SK-N-SH (cell line): ENCODE measurements at regions of chr15 and their contacts with region 1.

Region 1: GRCh38 chr15:74906446-74907162 is at the start of gene FAM219B:
- DNase-seq: peak; percentile 98
- H3K4me3 ChIP-seq: peak within 1 kb of the TSS; percentile 86 to 89
- H3K27ac ChIP-seq: peak within 1 kb of the TSS; percentile 58 to 84
- H3K4me1 ChIP-seq: peaks cover 4 to 18% of the 10 kb centered on the region in 2 experiments; a peak in 3 of 4 replicates
- H3K27me3 ChIP-seq: no peaks in the 10 kb centered on the region
- CTCF ChIP-seq: no peak
- EP300 ChIP-seq: no peak
- RAD21 ChIP-seq: no peak
- polyA plus RNA-seq, gene FAM219B: 53.0 and 90.2 TPM in 2 replicates

Region 2: DNA sequence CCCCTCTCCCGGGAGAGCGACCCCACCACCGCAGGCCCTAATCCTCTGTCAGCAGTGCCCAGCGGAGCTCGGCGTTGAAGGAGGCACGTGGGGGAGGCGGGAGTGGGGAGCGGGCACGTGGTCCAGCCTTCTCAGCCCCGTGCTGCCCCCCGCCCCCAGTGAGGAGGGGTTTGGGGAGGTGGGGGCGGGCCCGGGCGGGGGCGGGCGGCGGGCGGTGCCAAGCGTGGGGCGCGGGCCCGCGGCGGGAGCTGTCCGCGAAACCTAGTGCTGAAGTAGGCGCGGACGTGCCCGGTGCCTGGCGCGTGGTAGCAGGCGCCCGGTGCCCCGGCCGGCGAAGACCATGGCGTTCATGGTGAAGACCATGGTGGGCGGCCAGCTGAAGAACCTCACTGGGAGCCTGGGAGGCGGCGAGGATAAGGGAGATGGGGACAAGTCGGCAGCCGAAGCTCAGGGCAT is 80.2 kb before region 1 on chr15 and contains the start of gene CPLX3:
- CTCF ChIA-PET with region 1: interaction called, 12 read pairs
- POLR2A ChIA-PET with region 1: no interaction called
- DNase-seq: peak; percentile 62
- H3K4me3 ChIP-seq: no peak within 1 kb of the TSS
- H3K27ac ChIP-seq: no peak within 1 kb of the TSS
- H3K4me1 ChIP-seq: peaks cover 0 to 20% of the 10 kb centered on the region in 2 experiments; a peak in 1 of 4 replicates
- H3K27me3 ChIP-seq: peaks cover 24% of the 10 kb centered on the region; the same call in 1 of the 2 replicates
- CTCF ChIP-seq: no peak
- EP300 ChIP-seq: no peak
- RAD21 ChIP-seq: no peak
- polyA plus RNA-seq, gene CPLX3: not detected in 2 replicates

Region 3: GRCh38 chr15:74884428-74885223 is 22.0 kb before region 1 on chr15:
- CTCF ChIA-PET with region 1: interaction called, 21 read pairs
- POLR2A ChIA-PET with region 1: interaction called, 9 read pairs
- DNase-seq: no peak
- H3K4me3 ChIP-seq: no peak overlapping the region
- H3K27ac ChIP-seq: no peak overlapping the region
- H3K4me1 ChIP-seq: peaks cover 0 to 7% of the 10 kb centered on the region in 2 experiments; a peak in 1 of 4 replicates
- H3K27me3 ChIP-seq: no peaks in the 10 kb centered on the region
- CTCF ChIP-seq: no peak
- EP300 ChIP-seq: no peak
- RAD21 ChIP-seq: no peak

Region 4: GRCh38 chr15:74920456-74920855 is 13.9 kb after region 1 on chr15:
- CTCF ChIA-PET with region 1: interaction called, 25 read pairs
- POLR2A ChIA-PET with region 1: interaction called, 3 read pairs
- DNase-seq: no peak
- H3K4me3 ChIP-seq: no peak overlapping the region
- H3K27ac ChIP-seq: no peak overlapping the region
- H3K4me1 ChIP-seq: no peaks in the 10 kb centered on the region
- H3K27me3 ChIP-seq: no peaks in the 10 kb centered on the region
- CTCF ChIP-seq: no peak
- EP300 ChIP-seq: no peak
- RAD21 ChIP-seq: no peak

Region 5: GRCh38 chr15:74956648-74957300 is 50.2 kb after region 1 on chr15 and contains the start of gene RPP25:
- CTCF ChIA-PET with region 1: interaction called, 33 read pairs
- POLR2A ChIA-PET with region 1: interaction called, 5 read pairs
- DNase-seq: peak; percentile 92
- H3K4me3 ChIP-seq: peak within 1 kb of the TSS; percentile 54 to 64
- H3K27ac ChIP-seq: peak within 1 kb of the TSS in 1 of 2 experiments; percentile 98; a peak in 2 of 4 replicates
- H3K4me1 ChIP-seq: peaks cover 0 to 40% of the 10 kb centered on the region in 2 experiments; a peak in 1 of 4 replicates
- H3K27me3 ChIP-seq: no peaks in the 10 kb centered on the region; the same call in 1 of the 2 replicates
- CTCF ChIP-seq: no peak
- EP300 ChIP-seq: no peak
- RAD21 ChIP-seq: no peak
- polyA plus RNA-seq, gene RPP25: 1.7 TPM in 2 replicates

Region 6: GRCh38 chr15:75104804-75105535 is 198.4 kb after region 1 on chr15:
- CTCF ChIA-PET with region 1: no interaction called
- POLR2A ChIA-PET with region 1: no interaction called
- DNase-seq: no peak
- H3K4me3 ChIP-seq: no peak overlapping the region
- H3K27ac ChIP-seq: peak overlapping the region in 1 of 2 experiments; percentile 42; a peak in 1 of 4 replicates
- H3K4me1 ChIP-seq: peaks cover 0 to 13% of the 10 kb centered on the region in 2 experiments; a peak in 2 of 4 replicates
- H3K27me3 ChIP-seq: no peaks in the 10 kb centered on the region
- CTCF ChIP-seq: no peak
- EP300 ChIP-seq: no peak
- RAD21 ChIP-seq: no peak